GM18951 (cell line): ENCODE measurements at regions of chr1 and their contacts with region 1.

Region 1: DNA sequence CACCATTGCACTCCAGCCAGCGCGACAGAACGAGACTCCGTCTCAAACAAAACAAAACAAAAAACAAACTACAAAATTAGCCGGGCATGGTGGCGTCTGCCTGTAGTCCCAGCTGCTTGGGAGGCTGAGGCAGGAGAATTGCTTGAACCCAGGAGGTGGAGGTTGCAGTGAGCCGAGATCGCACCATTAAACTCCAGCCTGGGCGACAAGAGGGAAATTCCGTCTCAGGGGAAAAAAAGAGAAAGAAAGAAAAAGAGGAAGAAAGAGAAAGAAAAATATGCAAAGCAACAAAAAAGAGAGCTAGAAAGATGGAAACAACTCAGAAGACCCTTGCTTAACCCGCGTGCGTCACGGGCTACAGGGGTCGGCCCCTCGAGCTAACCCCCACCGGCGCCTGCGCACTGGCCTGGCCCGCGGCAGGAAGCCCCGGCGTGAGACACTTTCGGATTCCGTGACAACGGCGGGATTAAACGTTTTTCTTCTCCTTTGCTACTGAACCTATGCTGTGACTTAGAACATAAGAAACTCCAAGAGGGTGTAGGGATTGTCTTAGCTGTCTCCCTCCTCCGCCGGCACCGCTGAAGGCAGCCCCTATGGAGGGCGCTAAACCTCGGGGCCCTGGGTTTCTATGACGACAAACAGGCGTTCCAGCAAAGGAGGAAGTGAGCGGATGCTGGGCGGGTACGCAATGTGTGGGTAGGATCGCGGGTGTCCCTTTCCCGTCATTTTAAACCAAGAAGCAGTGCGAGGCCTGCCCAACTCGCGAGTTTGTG is at the start of gene AXDND1:
- POLR2A ChIP-seq: peak; percentile 53

Region 2: DNA sequence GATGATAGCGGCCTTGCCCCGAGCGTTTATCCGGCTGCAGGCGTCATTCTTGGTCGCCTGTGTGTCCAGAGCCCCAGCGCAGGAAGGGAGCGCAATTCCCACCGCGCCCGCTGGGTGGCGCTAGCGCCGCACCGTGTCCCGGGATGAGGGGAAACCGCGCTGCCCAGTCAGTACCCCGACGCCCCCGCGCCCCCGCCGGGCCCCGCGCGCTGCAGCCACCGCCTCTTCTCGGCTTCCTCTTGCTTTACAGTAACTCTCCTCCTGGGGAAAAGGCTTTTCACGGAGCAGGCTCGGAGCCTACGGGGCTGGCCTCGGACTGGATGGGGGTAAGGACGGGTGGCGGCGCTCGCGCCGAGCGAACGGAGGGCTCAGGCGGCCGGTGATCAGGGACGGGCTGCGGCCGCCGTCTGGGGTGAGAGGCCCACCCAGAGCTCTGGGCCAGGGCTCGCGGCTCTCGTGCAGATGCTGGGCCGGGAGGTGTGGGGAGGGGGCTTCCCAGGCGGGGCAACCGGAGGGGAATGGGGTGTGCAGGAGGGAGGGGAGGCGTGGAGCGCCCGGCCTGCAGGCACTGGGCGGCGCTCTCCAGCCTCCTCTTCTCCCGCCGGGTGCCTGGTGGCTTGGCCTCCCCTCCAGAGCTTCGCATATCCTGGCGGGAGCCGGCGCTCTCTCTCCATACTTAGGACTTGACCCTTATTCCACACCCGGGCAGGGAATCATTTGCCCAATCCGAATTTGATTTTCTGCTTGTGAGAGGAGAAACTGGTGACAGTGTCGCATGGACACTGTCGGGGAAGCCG is 822.7 kb before region 1 on chr1:
- in situ Hi-C with region 1: loop called (anchors 25 kb)
- POLR2A ChIP-seq: no peak

Region 3: GRCh38 chr1:179081687-179082332 is 283.7 kb before region 1 on chr1 and contains the start of gene TOR3A:
- in situ Hi-C with region 1: loop called (anchors 5 kb)
- POLR2A ChIP-seq: peak; percentile 98